Colonic mucosa (tissue), 4 donors: ENCODE measurements at regions of chr15 and their contacts with region 1.

Region 1: DNA sequence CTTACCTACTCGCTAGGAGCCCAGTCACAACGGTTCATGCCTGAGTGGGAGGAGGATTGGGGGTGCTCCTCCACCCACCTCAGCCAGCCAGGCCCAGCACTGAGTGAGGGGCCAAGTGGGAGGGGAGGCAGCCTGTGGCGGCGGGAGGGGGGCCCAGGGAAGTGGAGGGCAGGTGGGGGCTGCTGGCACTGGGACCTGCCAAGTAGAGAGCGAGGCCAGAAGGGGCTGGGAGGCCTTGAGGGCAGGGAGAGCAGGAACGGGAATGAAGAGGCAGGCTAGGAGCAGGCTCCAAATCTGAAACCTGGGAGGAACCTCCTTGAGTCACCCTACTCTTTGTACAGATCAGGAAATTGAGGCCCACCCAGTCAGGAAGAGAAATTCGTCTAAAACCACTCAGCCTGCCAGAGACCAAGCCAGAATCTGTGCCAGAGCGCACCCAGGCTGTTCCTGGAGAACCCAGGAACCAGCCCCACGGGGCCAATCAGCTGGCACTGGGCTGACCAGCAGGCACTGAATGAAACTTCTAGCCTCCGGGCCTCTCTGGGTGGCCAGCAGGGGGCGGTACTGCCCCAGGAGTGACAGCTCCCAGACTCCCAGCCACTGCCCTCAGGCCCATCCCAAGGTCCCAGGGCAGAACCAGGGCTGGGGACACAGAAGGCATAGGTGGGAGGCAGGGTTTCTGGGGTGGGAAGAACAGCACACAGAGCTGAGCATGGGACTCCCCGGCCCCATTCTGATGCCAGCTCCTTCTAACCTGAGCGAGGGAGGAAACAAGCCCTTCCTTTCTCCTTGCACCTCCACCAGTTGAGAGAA is 14.8 kb upstream of the CYP11A1 start:
- DNase-seq: peak; percentile 86
- H3K4me3 ChIP-seq: no peak overlapping the region
- H3K27ac ChIP-seq: no peak overlapping the region
- H3K4me1 ChIP-seq: no peaks in the 10 kb centered on the region
- H3K27me3 ChIP-seq: no peaks in the 10 kb centered on the region
- CTCF ChIP-seq: peak; percentile 95

Region 2: GRCh38 chr15:74441248-74441941 is 59.2 kb after region 1 on chr15:
- intact Hi-C with region 1: loop called (anchors 2 kb)
- DNase-seq: no peak
- H3K4me3 ChIP-seq: no peak overlapping the region
- H3K27ac ChIP-seq: no peak overlapping the region
- H3K4me1 ChIP-seq: no peaks in the 10 kb centered on the region
- H3K27me3 ChIP-seq: no peaks in the 10 kb centered on the region
- CTCF ChIP-seq: no peak